ENCODE measurements at regions of chr7 and their contacts with region 1.

Region 1: DNA sequence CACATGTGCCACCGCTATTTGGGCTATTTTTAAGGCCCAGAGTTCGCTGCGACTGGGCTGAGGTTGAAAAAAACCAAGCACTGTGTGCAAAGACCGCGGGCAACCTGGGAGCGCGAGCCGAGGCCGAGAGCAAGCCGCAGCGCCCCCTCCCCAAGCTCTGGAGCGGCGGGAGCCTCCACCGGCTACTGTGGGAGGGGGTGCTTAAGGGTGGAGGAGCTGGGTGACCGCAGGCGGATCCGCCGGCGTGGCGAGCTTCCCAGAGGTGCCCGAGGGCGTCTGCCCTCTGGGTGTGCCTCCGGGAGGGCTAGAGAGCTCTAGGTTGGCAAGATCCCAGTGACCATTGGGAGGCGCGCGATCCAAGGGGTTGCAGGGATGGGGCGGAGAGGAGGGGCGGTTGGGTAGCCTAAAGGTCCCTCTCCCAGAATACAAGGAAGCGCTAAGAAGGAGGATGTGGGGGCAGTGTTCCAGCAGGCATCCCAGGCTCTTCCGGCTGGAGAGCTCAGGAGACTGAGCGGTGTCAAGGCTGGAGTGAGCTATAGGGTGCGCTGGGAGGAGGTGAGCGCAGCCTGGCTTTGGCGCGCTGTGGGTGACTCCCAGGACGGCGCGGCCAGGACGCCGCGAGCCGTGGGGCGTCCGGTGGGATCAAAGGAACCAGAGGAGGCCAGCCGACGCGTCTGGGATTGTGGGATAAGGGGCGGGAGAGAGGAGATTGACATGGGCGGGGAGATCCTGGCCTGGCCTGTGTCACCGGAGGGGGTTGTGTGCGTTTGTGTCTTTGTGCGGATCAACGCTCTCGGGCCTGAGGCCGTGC is 8.0 kb downstream of the DLX5 start:
- DNase-seq: peak; percentile 89
- H3K4me3 ChIP-seq: peak overlapping the region; percentile 38 to 53
- H3K27ac ChIP-seq: no peak overlapping the region
- H3K4me1 ChIP-seq: peaks cover 0 to 8% of the 10 kb centered on the region in 2 experiments; a peak in 3 of 4 replicates
- H3K27me3 ChIP-seq: peaks cover 27% of the 10 kb centered on the region
- CTCF ChIP-seq: no peak
- EP300 ChIP-seq: no peak
- RAD21 ChIP-seq: no peak

Region 2: DNA sequence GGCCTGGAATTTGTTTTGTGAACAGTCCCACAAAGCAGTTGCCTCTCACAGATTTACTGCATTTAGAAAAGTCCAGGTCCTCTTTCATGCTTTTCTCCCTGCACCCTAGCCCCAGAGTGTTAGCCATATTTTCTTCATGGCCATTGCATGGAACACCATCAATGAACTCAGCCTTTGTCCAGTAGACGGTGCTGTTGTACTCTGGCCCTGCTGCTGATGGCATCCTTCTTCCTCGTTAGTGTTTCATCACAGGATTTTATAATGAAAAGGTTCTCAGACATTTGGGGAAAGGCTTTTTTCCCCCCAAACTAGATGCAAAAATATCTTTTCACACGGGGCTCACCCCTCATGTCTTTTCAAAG is 601.7 kb before region 1 on chr7:
- CTCF ChIA-PET with region 1: interaction called, 16 read pairs
- POLR2A ChIA-PET with region 1: no interaction called
- DNase-seq: peak; percentile 51
- H3K4me3 ChIP-seq: no peak overlapping the region
- H3K27ac ChIP-seq: no peak overlapping the region
- H3K4me1 ChIP-seq: peaks cover 0 to 12% of the 10 kb centered on the region in 2 experiments; a peak in 2 of 4 replicates
- H3K27me3 ChIP-seq: no peaks in the 10 kb centered on the region
- CTCF ChIP-seq: peak; percentile 63
- EP300 ChIP-seq: no peak
- RAD21 ChIP-seq: peak; percentile 96

Region 3: GRCh38 chr7:97006036-97006815 is 10.4 kb before region 1 on chr7:
- CTCF ChIA-PET with region 1: interaction called, 38 read pairs
- POLR2A ChIA-PET with region 1: interaction called, 19 read pairs
- DNase-seq: peak; percentile 93
- H3K4me3 ChIP-seq: peak overlapping the region; percentile 54 to 68
- H3K27ac ChIP-seq: peak overlapping the region in 1 of 2 experiments; percentile 92; a peak in 2 of 4 replicates
- H3K4me1 ChIP-seq: peaks cover 0 to 12% of the 10 kb centered on the region in 2 experiments; a peak in 1 of 4 replicates
- H3K27me3 ChIP-seq: 0 out of 2 replicates have a peak, but pooled peaks cover 8% of the 10 kb centered on the region
- CTCF ChIP-seq: no peak
- EP300 ChIP-seq: peak in 1 of 2 experiments; percentile 65; a peak in 1 of 4 replicates
- RAD21 ChIP-seq: no peak

Measured in SK-N-SH (cell line).